ENCODE measurements at regions of chr5 and their contacts with region 1.

Region 1: DNA sequence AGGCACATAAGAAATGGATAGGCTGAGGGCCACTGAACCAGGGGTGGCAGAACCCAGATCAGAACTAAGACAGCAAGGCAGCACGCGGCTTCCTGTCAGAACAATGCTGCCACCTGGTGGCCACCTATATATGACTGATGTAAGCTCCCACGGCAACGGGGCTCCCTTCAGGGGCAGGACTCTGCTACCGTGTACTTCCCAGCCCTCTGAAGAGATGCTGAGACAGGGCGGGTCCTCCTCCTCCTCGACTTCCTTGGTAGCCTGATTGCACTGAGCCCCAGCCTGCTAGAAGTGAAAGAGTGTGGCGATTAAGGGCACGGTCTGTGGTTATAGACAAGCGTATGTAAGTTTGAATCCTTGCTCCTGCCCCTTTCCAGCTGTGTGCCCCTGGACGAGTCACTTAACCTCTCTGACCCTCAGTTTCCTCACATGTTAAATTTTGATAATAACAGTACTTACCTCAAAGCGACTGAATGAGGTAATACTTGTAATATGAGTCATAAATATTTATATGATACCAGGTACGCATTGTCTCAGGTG is 13.3 kb downstream of the RPS14 start:
- DNase-seq: peak; percentile 74 to 89 (median 86)
- ATAC-seq: peak; percentile 99
- H3K4me3 ChIP-seq: no peak overlapping the region
- H3K4me3 Mint-ChIP-seq: peak overlapping the region in 6 of 10 donors; percentile 29 to 61 (median 56)
- H3K27ac ChIP-seq: peak overlapping the region; percentile 12
- H3K27ac Mint-ChIP-seq: peak overlapping the region; percentile 53 to 94 (median 72)
- H3K4me1 ChIP-seq: peaks cover 0 to 7% of the 10 kb centered on the region in 2 donors
- H3K4me1 Mint-ChIP-seq: peaks cover 6 to 11% (median 7%) of the 10 kb centered on the region in 7 donors
- H3K27me3 ChIP-seq: no peaks in the 10 kb centered on the region
- H3K27me3 Mint-ChIP-seq: no peaks in the 10 kb centered on the region

Region 2: GRCh38 chr5:150000256-150000989 is 435.8 kb before region 1 on chr5 and contains the starts of genes HMGXB3 and TIGD6:
- CTCF ChIA-PET with region 1: no interaction called
- POLR2A ChIA-PET with region 1: no interaction called
- intact Hi-C with region 1: loop called in 1 of 2 experiments (anchors 1 kb)
- DNase-seq: peak; percentile 64 to 87 (median 74)
- ATAC-seq: peak; percentile 83
- H3K4me3 ChIP-seq: peak within 1 kb of the TSS; percentile 76
- H3K4me3 Mint-ChIP-seq: peak within 1 kb of the TSS; percentile 86 to 99 (median 93)
- H3K27ac ChIP-seq: peak within 1 kb of the TSS; percentile 80
- H3K27ac Mint-ChIP-seq: peak within 1 kb of the TSS; percentile 75 to 98 (median 94)
- H3K4me1 ChIP-seq: peaks cover 18 to 23% of the 10 kb centered on the region in 2 donors
- H3K4me1 Mint-ChIP-seq: peaks cover 33 to 55% (median 46%) of the 10 kb centered on the region in 7 donors
- H3K27me3 ChIP-seq: no peaks in the 10 kb centered on the region
- H3K27me3 Mint-ChIP-seq: no peaks in the 10 kb centered on the region
- total RNA-seq, gene HMGXB3: 27.2 to 40.6 (median 34.5) TPM
- total RNA-seq, gene TIGD6: 2.3 to 7.4 (median 2.8) TPM

Region 3: DNA sequence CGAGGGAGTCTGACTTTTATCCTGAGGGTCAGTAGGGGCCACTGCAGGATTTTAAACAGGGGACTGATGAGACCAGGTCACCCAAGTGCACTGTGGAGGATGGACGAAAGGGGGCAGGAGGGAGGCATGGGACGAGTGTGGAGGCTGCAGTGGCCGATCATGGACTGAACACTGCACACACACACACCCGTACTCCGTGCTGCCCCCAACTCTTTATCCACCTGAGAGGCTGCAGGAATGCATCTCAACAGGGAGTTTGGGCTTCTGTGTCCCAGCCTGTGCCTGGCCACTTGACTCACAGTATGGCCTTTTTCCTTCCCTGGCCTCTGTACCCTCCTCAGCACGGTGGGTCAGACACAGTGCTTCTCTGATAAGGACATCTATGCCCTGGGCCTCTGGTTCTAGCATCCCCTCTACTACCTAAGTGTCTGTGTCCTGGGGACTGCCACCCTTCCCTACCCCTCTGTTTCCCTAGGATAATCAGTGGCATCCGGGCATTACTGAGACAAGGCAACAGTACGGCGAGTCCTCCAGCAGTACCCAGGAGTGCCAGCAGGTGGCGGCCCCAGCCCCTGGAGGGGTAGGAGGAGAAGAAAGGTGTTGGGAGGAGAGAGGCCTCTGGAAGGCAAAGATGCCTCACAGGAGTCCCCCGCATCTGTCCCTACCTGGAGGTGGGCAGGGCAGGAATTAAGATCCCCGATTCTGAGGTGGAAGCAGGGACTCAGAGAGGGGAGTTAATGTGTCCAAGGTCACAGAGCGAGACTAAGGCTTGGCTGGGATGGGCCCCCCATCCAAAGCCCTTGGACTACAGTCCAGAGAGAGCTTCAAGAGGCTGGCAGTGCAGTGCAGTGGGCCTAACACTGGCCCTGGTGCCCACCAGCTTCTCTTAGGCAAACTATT is 274.7 kb before region 1 on chr5:
- CTCF ChIA-PET with region 1: interaction called, 6 read pairs
- POLR2A ChIA-PET with region 1: no interaction called
- intact Hi-C with region 1: loop called in 1 of 2 experiments (anchors 1 kb)
- DNase-seq: peak; percentile 35 to 80 (median 60)
- ATAC-seq: peak; percentile 82
- H3K4me3 ChIP-seq: no peak overlapping the region
- H3K4me3 Mint-ChIP-seq: no peak overlapping the region
- H3K27ac ChIP-seq: no peak overlapping the region
- H3K27ac Mint-ChIP-seq: peak overlapping the region in 1 of 9 donors; percentile 16
- H3K4me1 ChIP-seq: no peaks in the 10 kb centered on the region
- H3K4me1 Mint-ChIP-seq: peaks cover 0 to 4% (median under 1%) of the 10 kb centered on the region in 7 donors
- H3K27me3 ChIP-seq: no peaks in the 10 kb centered on the region
- H3K27me3 Mint-ChIP-seq: peaks cover 19 to 32% (median 30%) of the 10 kb centered on the region in 5 donors

Region 4: DNA sequence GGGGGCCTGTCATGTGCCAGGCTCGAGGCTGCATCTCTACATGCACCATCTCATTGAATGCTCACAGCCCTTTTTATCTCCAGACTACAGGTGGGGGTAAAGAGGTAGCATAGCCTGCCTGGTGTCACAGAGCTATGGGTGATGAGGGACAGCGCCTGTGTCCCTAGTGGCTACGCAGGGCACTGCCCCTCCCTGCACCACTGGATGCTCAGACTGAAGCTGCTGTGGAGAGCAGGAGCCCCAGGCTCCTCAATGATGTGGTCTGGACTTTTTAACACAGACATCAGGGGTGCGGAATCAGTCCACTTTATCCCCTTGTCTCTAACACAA is 149.4 kb before region 1 on chr5:
- CTCF ChIA-PET with region 1: no interaction called
- POLR2A ChIA-PET with region 1: no interaction called
- intact Hi-C with region 1: loop called in 1 of 2 experiments (anchors 1 kb)
- DNase-seq: peak in 1 of 9 donors; percentile 1
- ATAC-seq: peak; percentile 36
- H3K4me3 ChIP-seq: no peak overlapping the region
- H3K4me3 Mint-ChIP-seq: no peak overlapping the region
- H3K27ac ChIP-seq: no peak overlapping the region
- H3K27ac Mint-ChIP-seq: no peak overlapping the region
- H3K4me1 ChIP-seq: no peaks in the 10 kb centered on the region
- H3K4me1 Mint-ChIP-seq: no peaks in the 10 kb centered on the region
- H3K27me3 ChIP-seq: no peaks in the 10 kb centered on the region
- H3K27me3 Mint-ChIP-seq: peaks cover 0 to 8% (median 0%) of the 10 kb centered on the region in 5 donors

Region 5: GRCh38 chr5:150449517-150450339 is 13.5 kb after region 1 on chr5 and contains the start of gene RPS14:
- CTCF ChIA-PET with region 1: interaction called, 6 read pairs
- POLR2A ChIA-PET with region 1: interaction called, 13 read pairs
- intact Hi-C with region 1: loop called (anchors 1 kb)
- DNase-seq: peak; percentile 89 to 98 (median 97)
- ATAC-seq: peak; percentile 97
- H3K4me3 ChIP-seq: peak within 1 kb of the TSS; percentile 68
- H3K4me3 Mint-ChIP-seq: peak within 1 kb of the TSS; percentile 89 to 100 (median 96)
- H3K27ac ChIP-seq: peak within 1 kb of the TSS; percentile 100
- H3K27ac Mint-ChIP-seq: peak within 1 kb of the TSS; percentile 97 to 100 (median 100)
- H3K4me1 ChIP-seq: peaks cover 18 to 23% of the 10 kb centered on the region in 2 donors
- H3K4me1 Mint-ChIP-seq: peaks cover 21 to 44% (median 37%) of the 10 kb centered on the region in 7 donors
- H3K27me3 ChIP-seq: no peaks in the 10 kb centered on the region
- H3K27me3 Mint-ChIP-seq: no peaks in the 10 kb centered on the region
- total RNA-seq, gene RPS14: 2,331 to 7,378 (median 6,414) TPM